Heart right ventricle (tissue), 16 donors: ENCODE measurements at regions of chr10 and their contacts with region 1.

Region 1: GRCh38 chr10:71475243-71475871 is 78.6 kb downstream of the CDH23 start:
- DNase-seq: peak in 1 of 2 donors; percentile 40
- ATAC-seq: peak; percentile 8 to 43 (median 32)
- H3K4me3 ChIP-seq: peak overlapping the region in 1 of 10 donors; percentile 20
- H3K27ac ChIP-seq: peak overlapping the region in 9 of 10 donors; percentile 32 to 70 (median 53)
- H3K4me1 ChIP-seq: peaks cover 15 to 84% (median 61%) of the 10 kb centered on the region in 9 donors
- H3K27me3 ChIP-seq: no peaks in the 10 kb centered on the region
- CTCF ChIP-seq: no peak

Region 2: GRCh38 chr10:71408436-71409225 is 66.7 kb before region 1 on chr10:
- intact Hi-C with region 1: no loop called
- DNase-seq: no peak
- ATAC-seq: no peak
- H3K4me3 ChIP-seq: no peak overlapping the region
- H3K27ac ChIP-seq: no peak overlapping the region
- H3K4me1 ChIP-seq: no peaks in the 10 kb centered on the region
- H3K27me3 ChIP-seq: peaks cover 0 to 10% (median 0%) of the 10 kb centered on the region in 7 donors
- CTCF ChIP-seq: no peak

Region 3: DNA sequence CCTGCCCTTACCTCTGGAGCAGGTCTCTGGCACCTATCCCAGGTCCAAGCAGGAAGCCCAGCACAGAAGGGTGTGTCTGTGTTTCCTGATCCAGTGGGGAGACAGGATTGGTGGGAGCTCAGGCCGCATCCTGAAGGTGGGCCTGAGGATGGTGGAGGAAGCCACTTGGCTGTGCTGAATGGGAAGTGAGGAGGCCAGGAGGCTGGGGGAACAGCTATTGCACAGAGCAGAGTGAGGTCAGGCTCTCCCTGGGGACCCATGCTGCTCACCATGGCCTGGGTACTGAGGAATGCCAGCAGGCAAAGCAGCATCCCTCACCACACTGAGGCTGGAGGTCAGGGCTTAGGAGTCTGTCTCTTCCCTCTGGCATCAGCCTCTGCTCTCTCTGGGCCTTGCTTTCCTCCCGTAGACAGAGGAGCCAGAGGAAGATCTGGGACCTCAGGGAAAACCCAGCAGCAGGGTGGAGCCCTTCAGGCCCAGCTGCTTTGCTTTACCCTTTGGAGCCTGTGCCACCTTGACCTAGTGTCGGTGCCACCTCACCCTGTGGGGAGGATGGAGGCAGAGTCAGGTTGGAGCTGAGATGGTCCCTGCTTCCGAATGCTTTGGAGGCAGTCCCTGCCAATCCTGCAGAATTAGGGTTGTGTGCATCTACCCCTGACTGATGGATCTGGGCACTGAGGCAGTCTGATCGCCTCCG is 39.6 kb before region 1 on chr10:
- intact Hi-C with region 1: loop called in 1 of 10 experiments (anchors 5 kb)
- DNase-seq: peak; percentile 29 to 41
- ATAC-seq: peak; percentile 61 to 88 (median 80)
- H3K4me3 ChIP-seq: no peak overlapping the region
- H3K27ac ChIP-seq: peak overlapping the region in 9 of 10 donors; percentile 35 to 83 (median 68)
- H3K4me1 ChIP-seq: peaks cover 0 to 71% (median 25%) of the 10 kb centered on the region in 9 donors
- H3K27me3 ChIP-seq: no peaks in the 10 kb centered on the region
- CTCF ChIP-seq: no peak